Activated B cell treated with CpG ODN at 0.5 μM for 24 hours (primary cell): ENCODE measurements at regions of chr3 and their contacts with region 1.

Region 1: DNA sequence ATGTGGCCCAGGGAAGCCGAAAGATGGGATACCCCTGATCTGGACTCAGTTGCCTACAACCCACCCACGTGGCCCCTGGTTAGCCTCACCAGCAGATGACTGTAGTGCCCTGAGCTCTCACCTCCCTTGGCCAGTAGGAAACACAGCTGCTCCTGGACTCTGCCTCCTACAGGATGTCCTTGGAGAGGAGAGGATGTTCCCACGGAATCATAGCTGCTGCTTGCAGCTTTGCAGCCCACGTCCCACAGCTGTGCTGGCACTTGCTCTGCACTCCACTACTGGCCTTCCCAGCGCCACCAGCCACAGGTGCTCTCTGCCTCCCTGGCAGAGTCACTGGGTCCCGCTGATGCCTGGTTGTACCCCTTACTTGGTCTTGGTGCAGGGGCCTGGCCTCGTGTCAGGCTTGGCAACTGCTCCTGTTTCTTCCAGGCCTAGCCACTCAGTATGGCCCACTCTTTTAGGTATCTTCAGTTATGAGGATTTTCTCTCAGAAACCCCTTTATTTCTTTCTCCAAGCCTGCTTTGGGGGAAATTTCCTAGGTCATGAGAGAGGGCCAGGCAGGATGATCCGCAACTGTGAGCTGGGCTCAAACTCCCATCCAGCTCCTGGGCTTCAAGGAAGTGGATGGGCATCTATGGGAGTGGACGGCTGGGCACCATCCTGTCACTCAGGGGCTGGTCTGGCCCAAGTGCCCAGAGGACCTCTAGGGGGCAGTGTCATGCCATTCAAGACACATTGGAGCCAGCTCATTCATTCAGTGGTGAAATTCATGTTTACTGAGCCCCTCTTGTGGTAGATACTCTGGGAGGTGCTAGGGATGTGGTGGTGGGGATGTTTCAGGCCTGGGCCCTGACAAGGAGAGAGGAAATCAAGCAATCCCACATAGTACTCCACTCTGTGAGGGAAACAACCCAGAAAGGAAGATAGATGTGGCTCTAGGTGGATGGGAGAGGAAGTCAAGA is 16.2 kb upstream of the VILL start:
- DNase-seq: peak; percentile 42
- ATAC-seq: peak; percentile 89
- H3K4me3 Mint-ChIP-seq: no peak overlapping the region
- H3K27ac Mint-ChIP-seq: no peak overlapping the region
- H3K4me1 Mint-ChIP-seq: no peaks in the 10 kb centered on the region
- H3K27me3 Mint-ChIP-seq: peaks cover 2% of the 10 kb centered on the region
- CTCF ChIP-seq: peak; percentile 68

Region 2: GRCh38 chr3:37163262-37164015 is 811.0 kb before region 1 on chr3:
- CTCF ChIA-PET with region 1: no interaction called
- POLR2A ChIA-PET with region 1: no interaction called
- intact Hi-C with region 1: no loop called
- DNase-seq: no peak
- ATAC-seq: no peak
- H3K4me3 Mint-ChIP-seq: no peak overlapping the region
- H3K27ac Mint-ChIP-seq: no peak overlapping the region
- H3K4me1 Mint-ChIP-seq: peaks cover 16% of the 10 kb centered on the region
- H3K27me3 Mint-ChIP-seq: no peaks in the 10 kb centered on the region
- CTCF ChIP-seq: no peak

Region 3: GRCh38 chr3:37668431-37668817 is 306.0 kb before region 1 on chr3:
- CTCF ChIA-PET with region 1: no interaction called
- POLR2A ChIA-PET with region 1: no interaction called
- intact Hi-C with region 1: no loop called
- DNase-seq: no peak
- ATAC-seq: no peak
- H3K4me3 Mint-ChIP-seq: no peak overlapping the region
- H3K27ac Mint-ChIP-seq: no peak overlapping the region
- H3K4me1 Mint-ChIP-seq: no peaks in the 10 kb centered on the region
- H3K27me3 Mint-ChIP-seq: peaks cover 5% of the 10 kb centered on the region
- CTCF ChIP-seq: no peak

Region 4: DNA sequence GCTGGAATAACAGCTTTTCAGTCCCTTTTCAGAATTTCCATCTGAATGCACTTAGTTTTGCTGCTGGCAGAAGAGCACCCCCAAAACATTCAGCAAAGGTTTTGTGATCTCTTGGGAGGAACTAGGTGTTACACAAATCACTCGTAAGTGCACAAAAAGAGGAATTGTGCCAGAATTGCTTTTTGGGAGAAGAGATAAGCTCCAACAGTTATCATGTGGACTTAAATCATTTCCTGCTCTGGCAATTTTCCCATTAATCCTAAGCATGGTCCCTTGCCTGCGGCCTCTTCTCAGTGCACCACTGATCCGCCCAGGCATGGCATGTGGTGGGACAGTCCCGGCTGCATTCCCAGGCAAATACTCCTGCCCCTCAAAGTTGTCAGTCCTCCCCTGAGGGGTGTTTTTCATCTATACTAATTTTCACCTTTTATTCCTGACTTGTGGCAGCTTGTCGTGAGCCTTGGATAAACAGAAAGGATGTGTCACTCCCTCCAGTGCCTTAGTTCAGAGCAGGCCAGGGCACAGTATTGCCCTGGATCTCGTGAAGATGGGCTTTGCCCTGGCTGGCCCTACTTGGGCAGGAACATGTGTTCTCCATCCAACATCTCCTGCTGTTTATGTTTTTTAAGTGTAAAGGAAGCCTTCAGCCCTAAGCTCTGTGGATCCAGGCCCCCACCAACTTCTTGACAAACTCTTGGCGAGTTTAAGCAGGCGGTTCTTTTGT is 28.4 kb before region 1 on chr3:
- CTCF ChIA-PET with region 1: no interaction called
- POLR2A ChIA-PET with region 1: no interaction called
- intact Hi-C with region 1: no loop called
- DNase-seq: no peak
- ATAC-seq: no peak
- H3K4me3 Mint-ChIP-seq: no peak overlapping the region
- H3K27ac Mint-ChIP-seq: no peak overlapping the region
- H3K4me1 Mint-ChIP-seq: no peaks in the 10 kb centered on the region
- H3K27me3 Mint-ChIP-seq: no peaks in the 10 kb centered on the region
- CTCF ChIP-seq: no peak

Region 5: DNA sequence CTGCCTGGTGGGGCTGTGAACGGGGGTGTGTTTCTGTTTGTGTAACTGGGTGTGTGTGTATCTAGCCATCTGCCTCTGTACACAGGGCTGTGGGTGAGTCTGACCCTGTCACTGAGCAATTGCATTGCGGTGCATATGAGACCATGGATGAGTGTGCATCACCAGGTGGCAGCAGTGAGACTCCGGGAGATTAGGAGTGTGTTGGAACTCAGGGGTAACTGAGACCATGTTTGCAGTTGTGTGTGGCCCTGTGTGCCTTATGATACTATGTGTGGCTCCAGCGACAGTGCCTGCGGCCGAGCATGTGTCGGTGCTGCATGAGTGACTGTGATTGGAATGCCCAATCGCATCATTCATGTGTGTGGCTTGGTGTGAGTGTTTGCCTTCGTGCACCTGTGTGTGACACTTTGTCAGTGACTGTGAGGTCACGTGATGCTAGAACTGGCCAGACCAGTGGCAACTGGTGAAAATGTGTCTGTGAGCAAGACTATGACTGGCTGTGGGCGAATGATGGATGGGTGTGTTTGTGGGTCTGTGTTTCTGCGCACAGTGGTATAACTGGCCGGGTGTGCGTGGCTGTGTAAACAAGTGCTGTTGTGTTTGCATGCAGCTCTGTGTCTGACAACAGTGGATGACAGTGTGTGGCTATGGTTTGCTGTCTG is 30.1 kb after region 1 on chr3:
- CTCF ChIA-PET with region 1: interaction called, 25 read pairs
- POLR2A ChIA-PET with region 1: no interaction called
- intact Hi-C with region 1: loop called (anchors 1 kb)
- DNase-seq: no peak
- ATAC-seq: peak; percentile 73
- H3K4me3 Mint-ChIP-seq: no peak overlapping the region
- H3K27ac Mint-ChIP-seq: peak overlapping the region; percentile 10
- H3K4me1 Mint-ChIP-seq: peaks cover 4% of the 10 kb centered on the region
- H3K27me3 Mint-ChIP-seq: no peaks in the 10 kb centered on the region
- CTCF ChIP-seq: no peak

Region 6: GRCh38 chr3:38039101-38039898 is 64.9 kb after region 1 on chr3 and contains the start of gene DLEC1:
- CTCF ChIA-PET with region 1: interaction called, 16 read pairs
- POLR2A ChIA-PET with region 1: no interaction called
- intact Hi-C with region 1: loop called (anchors 1 kb)
- DNase-seq: peak; percentile 57
- ATAC-seq: peak; percentile 74
- H3K4me3 Mint-ChIP-seq: peak within 1 kb of the TSS; percentile 86
- H3K27ac Mint-ChIP-seq: peak within 1 kb of the TSS; percentile 54
- H3K4me1 Mint-ChIP-seq: peaks cover 21% of the 10 kb centered on the region
- H3K27me3 Mint-ChIP-seq: peaks cover 5% of the 10 kb centered on the region
- CTCF ChIP-seq: no peak
- total RNA-seq, gene DLEC1: 0.10 and 0.11 TPM in 2 replicates

Region 7: GRCh38 chr3:38117748-38118420 is 143.5 kb after region 1 on chr3:
- CTCF ChIA-PET with region 1: no interaction called
- POLR2A ChIA-PET with region 1: no interaction called
- intact Hi-C with region 1: loop called (anchors 1 kb)
- DNase-seq: peak; percentile 58
- ATAC-seq: peak; percentile 88
- H3K4me3 Mint-ChIP-seq: no peak overlapping the region
- H3K27ac Mint-ChIP-seq: no peak overlapping the region
- H3K4me1 Mint-ChIP-seq: peaks cover 16% of the 10 kb centered on the region
- H3K27me3 Mint-ChIP-seq: no peaks in the 10 kb centered on the region
- CTCF ChIP-seq: no peak

Region 8: GRCh38 chr3:38297947-38298711 is 323.7 kb after region 1 on chr3:
- CTCF ChIA-PET with region 1: interaction called, 21 read pairs
- POLR2A ChIA-PET with region 1: no interaction called
- intact Hi-C with region 1: loop called (anchors 1 kb)
- DNase-seq: no peak
- ATAC-seq: no peak
- H3K4me3 Mint-ChIP-seq: no peak overlapping the region
- H3K27ac Mint-ChIP-seq: no peak overlapping the region
- H3K4me1 Mint-ChIP-seq: no peaks in the 10 kb centered on the region
- H3K27me3 Mint-ChIP-seq: peaks cover 14% of the 10 kb centered on the region
- CTCF ChIP-seq: no peak

Region 9: GRCh38 chr3:38479431-38480092 is 505.2 kb after region 1 on chr3:
- CTCF ChIA-PET with region 1: interaction called, 13 read pairs
- POLR2A ChIA-PET with region 1: no interaction called
- intact Hi-C with region 1: loop called (anchors 1 kb)
- DNase-seq: no peak
- ATAC-seq: peak; percentile 71
- H3K4me3 Mint-ChIP-seq: no peak overlapping the region
- H3K27ac Mint-ChIP-seq: no peak overlapping the region
- H3K4me1 Mint-ChIP-seq: no peaks in the 10 kb centered on the region
- H3K27me3 Mint-ChIP-seq: no peaks in the 10 kb centered on the region
- CTCF ChIP-seq: peak; percentile 83